CD14-positive monocyte (primary cell): ENCODE measurements at regions of chr19 and their contacts with region 1.

Region 1: DNA sequence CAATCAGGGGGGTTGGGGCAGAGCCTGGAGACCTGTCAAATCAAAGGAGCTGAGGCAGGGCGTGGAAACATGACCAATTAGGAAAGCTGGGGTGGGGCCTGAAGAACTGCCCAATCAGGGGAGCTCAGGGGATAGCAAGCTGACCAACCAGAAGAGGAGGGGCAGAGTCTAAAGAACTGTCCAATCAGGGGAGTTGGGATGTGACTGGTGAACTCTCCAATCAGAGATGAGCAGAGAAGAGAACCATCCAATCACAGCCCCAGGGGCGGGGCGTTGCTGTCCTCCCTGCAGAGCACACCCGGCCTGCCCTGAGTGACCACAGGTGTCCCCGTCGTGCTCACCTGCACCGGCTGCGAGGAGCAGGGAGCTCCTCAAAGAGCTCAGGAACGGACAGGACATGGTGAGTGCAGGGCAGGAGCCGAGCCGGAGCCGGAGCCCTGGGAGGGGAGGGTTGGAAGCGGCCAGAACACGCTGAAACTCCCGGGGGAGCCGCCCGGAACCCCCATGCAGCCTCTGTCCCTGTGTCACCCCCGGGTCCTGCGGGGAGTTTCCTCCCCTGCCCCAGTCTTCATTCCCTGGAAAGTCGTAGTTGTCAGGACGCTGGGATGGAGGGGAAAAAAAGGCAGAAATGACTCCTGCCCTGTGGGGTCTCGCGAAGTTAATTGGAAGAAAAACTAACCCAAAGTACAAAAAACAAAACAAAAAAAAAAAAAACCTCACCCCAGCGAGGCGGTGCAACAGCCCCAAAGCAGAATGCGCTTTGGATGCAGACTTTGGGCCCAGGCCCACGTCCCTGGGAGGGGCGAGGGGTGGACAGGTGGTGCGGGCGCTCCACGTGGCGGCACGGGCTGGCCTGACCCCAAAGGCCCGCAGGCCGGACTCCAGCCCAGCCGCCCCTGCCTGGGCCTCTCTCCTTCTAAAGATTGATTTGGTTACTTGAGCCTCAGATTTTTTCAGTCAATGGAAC is at the start of gene ZNF556:
- DNase-seq: no peak
- H3K4me3 ChIP-seq: no peak within 1 kb of the TSS
- H3K4me3 Mint-ChIP-seq: no peak within 1 kb of the TSS
- H3K27ac ChIP-seq: no peak within 1 kb of the TSS
- H3K27ac Mint-ChIP-seq: no peak within 1 kb of the TSS
- H3K4me1 ChIP-seq: no peaks in the 10 kb centered on the region
- H3K4me1 Mint-ChIP-seq: no peaks in the 10 kb centered on the region
- H3K27me3 ChIP-seq: no peaks in the 10 kb centered on the region
- H3K27me3 Mint-ChIP-seq: peaks cover 0 to 1% (median 0%) of the 10 kb centered on the region in 3 donors
- CTCF ChIP-seq: no peak
- polyA plus RNA-seq, gene ZNF556: not detected

Region 2: DNA sequence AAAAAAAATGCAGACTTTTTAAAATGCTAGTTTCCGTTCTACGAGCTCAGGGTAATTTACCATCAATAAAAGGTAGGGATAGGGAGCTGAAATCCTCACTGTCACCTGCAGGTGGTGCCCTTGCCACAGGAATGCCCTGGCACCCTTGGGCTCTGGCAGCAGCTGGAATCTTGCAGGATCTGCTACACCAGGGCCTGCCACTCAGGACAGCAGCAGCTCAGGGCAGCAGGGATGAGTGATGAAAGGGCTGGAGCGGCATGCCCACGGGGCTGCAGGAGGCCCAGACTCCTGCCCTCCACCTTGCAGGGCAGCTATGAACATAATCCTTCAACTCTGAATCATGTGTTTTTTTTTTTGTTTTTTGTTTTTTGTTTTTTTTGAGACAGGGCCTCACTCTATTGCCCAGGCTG is 218.8 kb before region 1 on chr19:
- intact Hi-C with region 1: loop called (anchors 2 to 10 kb)
- DNase-seq: peak; percentile 59 to 74 (median 69)
- H3K4me3 ChIP-seq: no peak overlapping the region
- H3K4me3 Mint-ChIP-seq: no peak overlapping the region
- H3K27ac ChIP-seq: no peak overlapping the region
- H3K27ac Mint-ChIP-seq: no peak overlapping the region
- H3K4me1 ChIP-seq: no peaks in the 10 kb centered on the region
- H3K4me1 Mint-ChIP-seq: no peaks in the 10 kb centered on the region
- H3K27me3 ChIP-seq: no peaks in the 10 kb centered on the region
- H3K27me3 Mint-ChIP-seq: no peaks in the 10 kb centered on the region
- CTCF ChIP-seq: peak; percentile 95

Region 3: GRCh38 chr19:2811735-2812406 is 55.4 kb before region 1 on chr19:
- intact Hi-C with region 1: loop called (anchors 5 kb)
- DNase-seq: no peak
- H3K4me3 ChIP-seq: no peak overlapping the region
- H3K4me3 Mint-ChIP-seq: no peak overlapping the region
- H3K27ac ChIP-seq: no peak overlapping the region
- H3K27ac Mint-ChIP-seq: no peak overlapping the region
- H3K4me1 ChIP-seq: no peaks in the 10 kb centered on the region
- H3K4me1 Mint-ChIP-seq: no peaks in the 10 kb centered on the region
- H3K27me3 ChIP-seq: no peaks in the 10 kb centered on the region
- H3K27me3 Mint-ChIP-seq: peaks cover 0 to 2% (median 0%) of the 10 kb centered on the region in 3 donors
- CTCF ChIP-seq: no peak

Region 4: GRCh38 chr19:2820112-2820702 is 47.1 kb before region 1 on chr19:
- intact Hi-C with region 1: loop called in 1 of 2 experiments (anchors 5 kb)
- DNase-seq: no peak
- H3K4me3 ChIP-seq: peak overlapping the region; percentile 34 to 81 (median 38)
- H3K4me3 Mint-ChIP-seq: peak overlapping the region; percentile 73 to 90
- H3K27ac ChIP-seq: peak overlapping the region in 1 of 2 donors; percentile 8
- H3K27ac Mint-ChIP-seq: peak overlapping the region in 2 of 7 donors; percentile 31 to 38
- H3K4me1 ChIP-seq: peaks cover 5 to 6% of the 10 kb centered on the region in 2 donors
- H3K4me1 Mint-ChIP-seq: peaks cover 9% of the 10 kb centered on the region
- H3K27me3 ChIP-seq: no peaks in the 10 kb centered on the region
- H3K27me3 Mint-ChIP-seq: peaks cover 0 to 2% (median 2%) of the 10 kb centered on the region in 3 donors
- CTCF ChIP-seq: no peak

Region 5: GRCh38 chr19:2840794-2841790 is 26.2 kb before region 1 on chr19 and contains the start of gene ZNF555:
- intact Hi-C with region 1: no loop called
- DNase-seq: peak; percentile 98 to 100 (median 99)
- H3K4me3 ChIP-seq: peak within 1 kb of the TSS; percentile 64 to 87 (median 68)
- H3K4me3 Mint-ChIP-seq: peak within 1 kb of the TSS; percentile 89 to 91
- H3K27ac ChIP-seq: peak within 1 kb of the TSS; percentile 76 to 87
- H3K27ac Mint-ChIP-seq: peak within 1 kb of the TSS; percentile 72 to 93 (median 89)
- H3K4me1 ChIP-seq: peaks cover 20 to 23% of the 10 kb centered on the region in 2 donors
- H3K4me1 Mint-ChIP-seq: peaks cover 22% of the 10 kb centered on the region
- H3K27me3 ChIP-seq: no peaks in the 10 kb centered on the region
- H3K27me3 Mint-ChIP-seq: peaks cover 0 to 4% (median 3%) of the 10 kb centered on the region in 3 donors
- CTCF ChIP-seq: peak; percentile 74
- polyA plus RNA-seq, gene ZNF555: 2.2 to 2.9 (median 2.6) TPM

Region 6: GRCh38 chr19:2923510-2923909 is 56.2 kb after region 1 on chr19:
- intact Hi-C with region 1: no loop called
- DNase-seq: no peak
- H3K4me3 ChIP-seq: no peak overlapping the region
- H3K4me3 Mint-ChIP-seq: no peak overlapping the region
- H3K27ac ChIP-seq: no peak overlapping the region
- H3K27ac Mint-ChIP-seq: peak overlapping the region in 1 of 7 donors; percentile 54
- H3K4me1 ChIP-seq: no peaks in the 10 kb centered on the region
- H3K4me1 Mint-ChIP-seq: no peaks in the 10 kb centered on the region
- H3K27me3 ChIP-seq: no peaks in the 10 kb centered on the region
- H3K27me3 Mint-ChIP-seq: no peaks in the 10 kb centered on the region
- CTCF ChIP-seq: no peak

Region 7: GRCh38 chr19:3163230-3163886 is 296.1 kb after region 1 on chr19:
- intact Hi-C with region 1: no loop called
- DNase-seq: peak; percentile 66 to 74 (median 74)
- H3K4me3 ChIP-seq: peak overlapping the region in 1 of 3 experiments; percentile 23
- H3K4me3 Mint-ChIP-seq: peak overlapping the region in 1 of 2 donors; percentile 51
- H3K27ac ChIP-seq: peak overlapping the region in 1 of 2 donors; percentile 98
- H3K27ac Mint-ChIP-seq: peak overlapping the region; percentile 66 to 99 (median 88)
- H3K4me1 ChIP-seq: peaks cover 42 to 49% of the 10 kb centered on the region in 2 donors
- H3K4me1 Mint-ChIP-seq: peaks cover 53% of the 10 kb centered on the region
- H3K27me3 ChIP-seq: no peaks in the 10 kb centered on the region
- H3K27me3 Mint-ChIP-seq: peaks cover 0 to 2% (median 2%) of the 10 kb centered on the region in 3 donors
- CTCF ChIP-seq: peak; percentile 98